ENCODE measurements at regions of chr19 and their contacts with region 1.

Region 1: DNA sequence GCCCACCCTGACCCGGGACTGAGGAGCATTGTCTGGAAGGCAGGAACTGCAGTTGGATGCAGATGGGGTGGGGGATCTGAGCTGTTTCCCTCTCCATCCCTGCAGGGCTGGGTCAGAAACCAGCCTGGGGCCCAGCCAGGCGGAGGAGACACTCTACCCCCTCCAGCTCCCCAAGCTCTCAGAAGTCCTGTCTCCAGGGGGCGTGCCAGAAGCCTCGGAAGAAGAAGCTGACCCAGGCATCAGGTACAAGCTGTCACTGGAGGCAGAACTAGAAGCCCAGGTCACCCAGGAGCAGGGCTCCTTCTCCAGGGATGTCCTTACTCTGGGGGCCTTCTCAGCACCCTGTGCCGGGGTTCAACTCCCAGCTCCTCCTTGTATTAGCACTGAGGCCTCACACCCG is 15.5 kb downstream of the SIX5 start:
- DNase-seq: peak; percentile 73
- ATAC-seq: peak; percentile 95
- H3K4me3 Mint-ChIP-seq: no peak overlapping the region
- H3K27ac Mint-ChIP-seq: no peak overlapping the region
- H3K4me1 Mint-ChIP-seq: peaks cover 3% of the 10 kb centered on the region
- H3K27me3 Mint-ChIP-seq: peaks cover 12% of the 10 kb centered on the region
- CTCF ChIP-seq: no peak

Region 2: DNA sequence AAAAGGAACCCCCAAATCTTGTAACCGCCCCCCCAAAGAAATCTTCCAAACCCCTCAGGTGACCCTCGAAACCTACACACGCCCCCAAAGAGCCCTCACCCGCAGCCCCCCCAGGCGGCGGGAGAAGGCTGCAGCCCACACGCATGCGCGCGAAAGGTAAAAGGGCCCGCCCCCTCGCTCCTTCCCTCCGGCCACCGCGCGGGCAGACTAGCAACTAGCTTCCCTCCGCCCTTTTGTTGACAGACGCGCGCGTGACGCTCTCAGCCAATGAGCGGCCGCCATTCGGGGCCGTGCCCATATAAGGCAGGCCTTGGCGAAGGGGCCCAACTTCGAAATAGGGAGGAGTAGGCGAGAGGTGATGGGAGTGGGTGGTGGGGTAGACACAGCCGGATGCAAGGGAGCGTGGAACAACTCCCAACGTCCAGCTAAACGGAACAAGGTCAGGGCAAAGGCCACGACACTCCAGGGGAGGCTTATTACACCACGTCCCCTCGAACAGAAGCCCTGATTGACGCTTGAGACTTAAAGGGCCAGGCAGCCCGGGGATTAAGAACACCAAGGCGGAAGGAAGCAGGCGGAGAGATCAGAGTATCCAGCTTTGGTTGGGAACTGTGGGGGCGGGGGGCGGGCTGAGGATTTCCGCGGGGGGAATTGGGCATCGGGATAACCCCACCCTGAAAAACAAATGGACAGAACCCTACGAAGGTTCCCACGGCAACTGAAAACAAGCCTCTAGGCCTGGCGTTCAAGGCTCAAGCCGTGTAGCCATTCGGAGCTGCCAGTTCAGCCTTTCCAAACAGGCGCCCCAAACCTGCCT is 36.2 kb before region 1 on chr19:
- CTCF ChIA-PET with region 1: interaction called, 13 read pairs
- POLR2A ChIA-PET with region 1: no interaction called
- DNase-seq: peak; percentile 99
- ATAC-seq: peak; percentile 98
- H3K4me3 Mint-ChIP-seq: peak overlapping the region; percentile 97
- H3K27ac Mint-ChIP-seq: peak overlapping the region; percentile 97
- H3K4me1 Mint-ChIP-seq: peaks cover 25% of the 10 kb centered on the region
- H3K27me3 Mint-ChIP-seq: no peaks in the 10 kb centered on the region; the same call in 1 of the 2 replicates
- CTCF ChIP-seq: no peak

Region 3: GRCh38 chr19:45763691-45764294 is 10.2 kb after region 1 on chr19:
- CTCF ChIA-PET with region 1: interaction called, 93 read pairs
- POLR2A ChIA-PET with region 1: interaction called, 20 read pairs
- DNase-seq: peak; percentile 32
- ATAC-seq: no peak
- H3K4me3 Mint-ChIP-seq: no peak overlapping the region
- H3K27ac Mint-ChIP-seq: no peak overlapping the region
- H3K4me1 Mint-ChIP-seq: peaks cover 18% of the 10 kb centered on the region
- H3K27me3 Mint-ChIP-seq: peaks cover 9% of the 10 kb centered on the region
- CTCF ChIP-seq: no peak

Region 4: GRCh38 chr19:45779231-45780145 is 25.9 kb after region 1 on chr19:
- CTCF ChIA-PET with region 1: interaction called, 11 read pairs
- POLR2A ChIA-PET with region 1: interaction called, 4 read pairs
- DNase-seq: peak; percentile 98
- ATAC-seq: peak; percentile 85
- H3K4me3 Mint-ChIP-seq: peak overlapping the region; percentile 78
- H3K27ac Mint-ChIP-seq: peak overlapping the region; percentile 47; the same call in 1 of the 2 replicates
- H3K4me1 Mint-ChIP-seq: peaks cover 33% of the 10 kb centered on the region
- H3K27me3 Mint-ChIP-seq: peaks cover 35% of the 10 kb centered on the region
- CTCF ChIP-seq: peak; percentile 72; the same call in 1 of the 2 replicates

Region 5: DNA sequence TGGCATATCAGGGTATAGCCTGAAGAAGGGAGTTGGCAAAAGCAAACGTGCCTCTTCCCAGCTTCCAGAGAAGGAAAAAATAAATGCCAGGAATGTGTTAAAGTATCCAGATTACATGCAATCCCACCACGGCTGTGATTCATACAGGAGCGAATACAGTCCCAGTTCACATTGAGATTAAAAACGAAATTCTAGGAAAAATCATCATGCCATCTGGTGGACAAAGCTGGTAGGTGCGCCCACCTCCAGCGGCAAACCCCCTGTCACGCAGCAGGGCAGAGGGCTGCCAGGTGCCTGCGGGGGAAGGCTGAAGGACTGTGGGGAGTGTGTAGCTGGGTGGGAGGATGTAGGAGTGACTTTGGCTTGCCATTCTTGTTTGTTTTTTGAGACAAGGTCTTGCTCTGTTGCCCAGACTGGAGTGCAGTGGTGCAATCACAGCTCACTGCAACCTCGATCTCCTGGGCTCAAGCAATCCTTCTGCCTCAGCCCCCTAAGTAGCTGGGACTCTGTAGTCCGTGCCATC is 45.5 kb after region 1 on chr19:
- CTCF ChIA-PET with region 1: interaction called, 13 read pairs
- POLR2A ChIA-PET with region 1: no interaction called
- DNase-seq: peak; percentile 75
- ATAC-seq: peak; percentile 86
- H3K4me3 Mint-ChIP-seq: no peak overlapping the region; the same call in 1 of the 2 replicates
- H3K27ac Mint-ChIP-seq: no peak overlapping the region
- H3K4me1 Mint-ChIP-seq: peaks cover 6% of the 10 kb centered on the region
- H3K27me3 Mint-ChIP-seq: peaks cover 57% of the 10 kb centered on the region
- CTCF ChIP-seq: peak; percentile 71

Region 6: DNA sequence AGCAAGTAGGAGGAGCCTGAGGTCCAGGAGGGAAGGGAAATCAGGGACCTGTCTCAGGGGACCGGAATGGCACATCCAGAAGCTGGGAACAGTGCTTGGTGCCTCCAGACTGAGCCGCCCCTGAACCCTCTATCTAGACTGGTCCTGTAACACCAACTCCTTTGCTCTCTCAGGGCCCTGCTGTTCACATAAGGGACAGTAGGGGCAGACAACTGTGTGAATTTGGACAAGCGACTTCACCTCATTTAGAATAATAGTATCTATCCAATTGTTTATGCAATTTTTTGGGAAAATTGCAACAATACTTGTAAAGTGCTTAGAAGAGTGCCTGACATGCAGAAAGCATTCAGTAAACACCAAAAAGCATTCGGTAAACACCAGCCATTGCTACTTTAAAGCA is 95.4 kb after region 1 on chr19:
- CTCF ChIA-PET with region 1: no interaction called
- POLR2A ChIA-PET with region 1: no interaction called
- DNase-seq: no peak
- ATAC-seq: peak; percentile 73
- H3K4me3 Mint-ChIP-seq: no peak overlapping the region
- H3K27ac Mint-ChIP-seq: no peak overlapping the region
- H3K4me1 Mint-ChIP-seq: no peaks in the 10 kb centered on the region
- H3K27me3 Mint-ChIP-seq: no peaks in the 10 kb centered on the region
- CTCF ChIP-seq: peak; percentile 26; the same call in 1 of the 2 replicates